ENCODE measurements at regions of chr21 and their contacts with region 1.

Region 1: DNA sequence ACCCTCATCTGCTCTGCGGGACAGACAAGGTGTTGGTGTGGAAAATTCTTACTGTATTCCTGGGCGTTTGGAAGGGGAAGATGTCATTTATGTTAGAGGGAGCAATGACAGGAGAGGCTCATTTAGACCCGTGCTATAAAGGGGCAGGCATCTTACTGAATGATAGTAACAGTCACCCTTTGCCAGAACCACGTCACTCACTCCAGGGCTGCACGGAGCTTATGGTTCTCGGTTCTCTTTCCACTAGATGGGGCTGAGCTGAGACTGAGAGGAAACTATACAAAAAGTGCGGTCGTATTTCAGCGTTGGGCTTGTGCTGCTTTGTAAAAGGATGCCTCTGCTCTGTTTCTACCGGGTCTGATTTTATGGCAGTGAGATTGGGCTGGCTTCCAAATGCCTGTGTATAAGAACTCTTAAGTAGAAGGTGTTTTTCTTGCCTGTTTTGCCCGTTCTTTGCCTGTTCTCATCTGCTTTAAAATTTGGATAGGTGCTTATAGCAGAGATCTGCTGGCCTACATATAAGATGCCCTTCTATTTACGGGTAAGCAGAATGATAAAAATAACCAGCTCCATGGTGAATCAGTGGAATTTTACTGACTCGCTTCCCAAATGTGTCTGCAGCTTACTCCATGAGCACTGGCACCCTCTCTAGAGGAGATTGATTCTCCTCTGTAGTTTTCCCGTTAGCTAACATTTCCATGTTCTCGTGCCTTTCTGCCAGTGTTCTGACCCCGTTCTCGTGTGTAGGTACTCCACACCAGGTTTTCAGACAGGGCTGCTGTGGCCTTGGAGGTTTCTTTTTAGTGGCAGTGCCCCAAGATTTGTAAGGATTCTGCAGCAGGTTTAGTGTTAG is 55.9 kb downstream of the MRPS6 start:
- DNase-seq: peak in 7 of 10 donors; percentile 33 to 91 (median 62)

Region 2: DNA sequence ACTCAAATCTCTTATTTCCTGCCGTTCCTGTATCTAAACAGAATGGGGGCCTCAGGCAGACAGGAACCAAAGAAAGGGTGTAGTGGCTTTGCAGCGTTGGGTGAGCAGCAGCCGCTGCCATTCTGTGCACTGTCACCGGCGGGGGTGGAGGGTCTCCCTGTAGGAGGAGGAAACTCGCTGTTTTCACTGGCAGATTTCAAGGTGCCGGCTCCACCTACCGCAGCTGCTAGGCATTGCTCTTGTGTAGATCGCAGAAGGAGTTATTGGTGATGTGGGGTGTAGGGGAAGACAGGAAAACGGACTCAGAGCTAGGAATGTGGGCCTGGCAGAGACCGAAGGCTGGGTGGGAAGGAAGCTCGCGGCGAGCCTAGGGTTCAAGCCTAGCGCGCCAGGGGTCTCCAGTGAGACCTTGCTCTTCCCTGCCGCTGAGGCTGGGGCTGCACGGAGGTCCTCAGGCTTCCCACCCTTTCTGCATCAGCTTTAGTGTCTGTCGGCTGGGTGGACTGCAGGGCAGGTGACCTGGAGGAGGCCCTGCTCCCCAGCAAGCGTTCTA is 234.5 kb before region 1 on chr21:
- intact Hi-C with region 1: no loop called
- DNase-seq: peak; percentile 49 to 97 (median 79)

Region 3: GRCh38 chr21:34202553-34203372 is 73.5 kb after region 1 on chr21:
- intact Hi-C with region 1: loop called (anchors 5 kb)
- DNase-seq: peak in 2 of 10 donors; percentile 30 to 79

Measured in posterior cingulate gyrus (tissue), 11 donors.